ENCODE measurements at regions of chr7 and their contacts with region 1.

Region 1: GRCh38 chr7:75866489-75867389 is 12.1 kb upstream of the RHBDD2 start:
- DNase-seq: peak in 9 of 10 donors; percentile 22 to 91 (median 62)

Region 2: DNA sequence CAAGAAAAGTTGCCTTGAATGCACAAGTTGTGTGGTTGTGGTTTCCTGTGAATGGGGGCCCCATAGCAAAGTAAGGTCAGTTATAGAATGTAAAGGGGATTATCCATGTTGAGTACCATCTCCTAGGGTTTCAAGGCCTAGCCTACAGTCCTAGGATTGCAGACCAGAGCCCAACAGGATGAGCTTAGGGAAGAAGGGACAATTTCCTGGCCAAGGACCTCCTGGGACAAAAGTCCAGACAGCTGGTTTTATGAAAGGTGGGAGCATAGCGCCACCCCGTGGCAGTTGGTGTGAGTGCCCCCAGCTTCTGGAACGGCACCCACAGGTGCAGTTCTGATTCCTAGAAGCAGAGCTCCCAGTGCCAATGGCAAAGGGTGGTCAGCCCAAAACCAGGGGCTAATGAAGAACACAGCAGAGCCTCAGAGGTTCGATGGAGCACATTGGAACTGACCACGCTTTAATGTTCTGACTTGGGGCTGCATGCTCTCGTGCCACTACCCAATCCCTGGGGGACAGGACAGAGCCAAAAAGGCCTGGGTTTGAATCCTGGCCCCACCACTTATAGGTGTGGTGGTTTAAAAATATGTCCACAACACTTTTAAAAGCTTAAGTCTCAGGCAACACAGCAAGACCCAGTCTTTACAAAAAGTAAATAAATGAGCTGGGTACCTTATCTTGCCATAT is 153.4 kb after region 1 on chr7:
- intact Hi-C with region 1: loop called (anchors 1 kb)
- DNase-seq: peak; percentile 57 to 96 (median 76)

Region 3: GRCh38 chr7:76037310-76037709 is 170.6 kb after region 1 on chr7:
- intact Hi-C with region 1: no loop called
- DNase-seq: peak in 2 of 10 donors; percentile 48 to 62

Region 4: DNA sequence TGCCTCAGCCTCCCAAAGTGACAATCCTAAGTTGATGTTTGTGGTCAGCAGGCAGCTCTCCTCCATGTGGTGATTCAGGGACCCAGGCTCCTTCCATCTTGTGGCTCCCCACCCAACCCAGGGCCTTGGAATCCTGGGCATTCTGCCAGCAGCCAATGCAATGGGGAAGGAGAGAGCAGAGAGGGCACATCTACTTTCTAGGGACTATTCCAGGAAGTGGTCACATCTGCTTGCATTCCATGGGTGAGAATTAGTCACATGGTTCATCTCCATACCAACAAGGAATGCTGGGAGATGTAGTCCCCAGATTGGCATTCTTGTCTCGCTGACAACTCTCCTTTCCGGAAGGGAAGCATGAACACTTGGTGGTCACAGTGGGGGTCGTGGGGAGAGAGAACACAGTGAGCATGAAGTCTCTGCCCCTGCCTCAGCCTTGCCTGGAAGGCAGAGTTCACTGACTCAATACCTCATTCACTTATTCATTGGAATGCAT is 325.1 kb after region 1 on chr7:
- intact Hi-C with region 1: no loop called
- DNase-seq: no peak